ENCODE measurements at regions of chr9 and their contacts with region 1.

Region 1: DNA sequence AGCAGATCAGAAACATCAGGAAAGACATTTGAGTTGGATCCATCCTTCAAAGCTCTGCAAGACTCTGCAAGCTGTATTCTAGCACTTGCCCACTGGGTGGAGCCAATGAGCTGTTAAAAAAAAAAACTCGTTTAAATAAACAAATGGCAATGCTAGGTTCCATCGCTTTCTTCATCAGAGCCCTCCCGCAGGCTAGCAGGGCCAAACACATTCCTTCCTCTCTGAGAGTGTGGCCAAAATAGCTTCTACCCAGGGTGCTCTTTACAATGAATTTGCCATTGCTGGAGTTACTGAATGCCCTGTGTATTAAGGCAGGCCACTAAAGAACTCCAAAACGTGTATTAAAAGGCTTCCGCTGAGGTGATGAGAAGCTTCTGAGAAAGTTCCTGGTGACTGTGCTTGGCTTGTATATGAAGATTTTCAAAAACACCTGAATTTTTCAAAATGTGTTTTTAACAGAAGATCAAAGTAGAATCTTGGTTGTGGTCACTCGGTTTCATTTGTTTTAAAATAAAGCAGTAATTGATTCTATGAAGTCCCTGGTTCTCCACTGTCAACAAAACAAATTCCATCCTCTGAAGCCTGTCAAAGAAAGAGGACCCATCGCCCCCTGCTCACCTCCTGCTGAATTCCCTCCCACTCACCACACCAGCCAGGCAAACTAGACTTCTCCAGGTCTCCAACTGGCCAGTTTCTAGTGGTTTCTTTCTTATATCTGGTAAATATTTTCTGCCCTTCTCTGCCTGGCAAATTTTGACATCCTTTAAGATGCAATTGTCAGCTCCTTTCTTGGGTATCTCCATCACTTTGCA is 36.5 kb upstream of the EQTN start:
- DNase-seq: peak in 38 of 42 donors; percentile 23 to 87 (median 69)

Region 2: GRCh38 chr9:27460226-27461023 is 127.0 kb after region 1 on chr9:
- intact Hi-C with region 1: loop called (anchors 10 kb)
- DNase-seq: no peak

Region 3: DNA sequence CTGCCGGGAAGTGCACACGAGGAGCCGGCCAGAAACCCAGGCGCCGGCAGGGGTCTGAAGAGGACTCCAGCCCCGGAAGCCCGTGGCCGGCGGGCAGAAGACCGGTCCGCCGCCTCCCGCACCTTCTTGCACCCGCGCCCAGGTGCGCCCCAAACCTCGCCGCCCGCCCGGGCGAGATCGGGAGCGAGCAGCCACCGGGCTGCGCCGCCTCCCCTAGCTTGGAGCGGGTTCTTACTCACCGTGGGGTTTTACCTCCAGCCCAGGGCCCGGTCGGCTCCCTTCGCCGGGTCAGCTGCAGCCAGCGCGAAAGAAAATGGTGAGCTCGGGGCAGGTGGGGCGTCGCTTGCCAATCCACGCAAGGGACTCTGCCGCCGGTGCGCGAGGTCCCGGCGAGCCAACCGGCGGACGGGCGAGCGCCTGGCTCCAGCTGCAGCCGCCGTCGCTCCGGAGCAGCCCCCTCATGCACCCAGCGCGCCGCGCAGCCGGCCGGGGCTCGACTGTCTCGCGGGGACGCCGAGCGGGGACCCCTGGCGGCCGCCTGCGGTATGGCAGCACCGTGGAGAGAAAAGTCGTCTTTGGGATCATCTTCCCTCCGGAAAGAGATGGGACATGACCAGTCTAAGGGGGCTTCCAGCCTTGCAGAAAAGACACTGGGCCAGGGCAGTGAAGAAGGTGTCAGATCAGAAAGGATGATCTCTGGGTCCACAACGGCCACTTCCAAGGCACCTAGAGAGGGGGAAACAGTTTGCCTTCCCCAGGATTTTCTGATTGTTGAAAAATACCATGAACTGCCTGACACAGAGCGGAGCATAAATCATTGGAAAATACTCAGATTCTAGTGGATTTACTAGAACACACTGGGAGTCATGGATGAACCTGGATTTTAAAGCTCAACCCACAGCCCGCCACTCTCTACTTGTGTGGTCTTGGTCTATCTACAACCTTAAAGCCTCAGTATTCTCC is 196.2 kb after region 1 on chr9 and contains the start of gene MOB3B:
- intact Hi-C with region 1: loop called (anchors 5 kb)
- DNase-seq: peak; percentile 83 to 98 (median 94)

Region 4: GRCh38 chr9:27548055-27548741 is 214.8 kb after region 1 on chr9:
- intact Hi-C with region 1: loop called (anchors 5 kb)
- DNase-seq: peak in 2 of 42 donors; percentile 49 to 65

Measured in head of caudate nucleus (tissue), 42 donors.